Natural killer cell (primary cell): ENCODE measurements at regions of chr12 and their contacts with region 1.

Region 1: GRCh38 chr12:26884765-26885576 is 52.0 kb upstream of the ITPR2 start:
- DNase-seq: peak; percentile 69 to 92
- ATAC-seq: peak; percentile 97 to 100 (median 99)
- H3K4me3 ChIP-seq: no peak overlapping the region
- H3K4me3 Mint-ChIP-seq: peak overlapping the region; percentile 68
- H3K27ac ChIP-seq: no peak overlapping the region
- H3K27ac Mint-ChIP-seq: peak overlapping the region in 1 of 2 donors; percentile 9
- H3K4me1 ChIP-seq: peaks cover 7% of the 10 kb centered on the region
- H3K4me1 Mint-ChIP-seq: peaks cover 12 to 15% of the 10 kb centered on the region in 2 donors
- H3K27me3 ChIP-seq: no peaks in the 10 kb centered on the region
- H3K27me3 Mint-ChIP-seq: peaks cover 11 to 28% of the 10 kb centered on the region in 2 donors
- CTCF ChIP-seq: peak; percentile 96

Region 2: DNA sequence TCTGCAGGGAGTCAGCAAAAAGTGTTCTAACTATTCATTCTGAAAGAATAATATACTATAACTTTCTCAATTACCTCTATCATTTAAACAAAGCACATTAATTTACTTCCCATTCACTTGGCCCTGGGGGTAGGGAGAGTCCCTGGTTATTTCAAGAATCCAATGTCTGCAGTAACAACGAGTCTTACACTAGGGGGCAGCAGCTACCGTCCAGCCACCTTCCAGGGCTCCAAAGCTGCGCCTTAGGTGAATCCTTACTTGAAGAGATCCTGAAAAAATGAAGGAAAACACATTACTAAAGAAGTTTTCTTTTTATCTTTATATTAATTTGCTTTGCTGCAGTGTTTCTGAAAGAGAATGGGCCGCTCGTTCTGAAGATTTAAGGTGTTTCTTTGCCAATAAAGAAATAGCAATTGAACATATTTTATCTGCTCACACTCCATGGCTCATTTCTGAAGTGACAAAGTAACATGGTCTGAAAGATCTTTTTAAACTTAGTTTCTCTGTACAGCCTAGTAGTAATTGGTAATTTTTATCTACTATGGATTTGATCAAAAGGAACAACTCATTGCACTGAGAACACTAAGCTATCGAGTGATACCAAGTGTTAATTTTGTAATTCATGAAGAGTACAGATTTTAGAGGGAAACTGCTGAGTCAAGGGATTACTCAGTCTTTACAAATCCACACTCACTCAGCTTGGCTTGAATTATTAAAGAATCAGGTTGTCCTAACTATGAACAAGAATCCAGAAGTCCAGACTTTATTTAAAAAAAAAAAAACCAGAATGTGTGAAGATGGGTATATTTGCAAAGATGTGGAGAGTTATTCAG is 787.7 kb before region 1 on chr12:
- intact Hi-C with region 1: loop called (anchors 10 kb)
- DNase-seq: peak; percentile 23 to 78
- ATAC-seq: peak; percentile 88 to 97 (median 91)
- H3K4me3 ChIP-seq: no peak overlapping the region
- H3K4me3 Mint-ChIP-seq: no peak overlapping the region
- H3K27ac ChIP-seq: no peak overlapping the region
- H3K27ac Mint-ChIP-seq: no peak overlapping the region
- H3K4me1 ChIP-seq: no peaks in the 10 kb centered on the region
- H3K4me1 Mint-ChIP-seq: no peaks in the 10 kb centered on the region
- H3K27me3 ChIP-seq: no peaks in the 10 kb centered on the region
- H3K27me3 Mint-ChIP-seq: peaks cover 5 to 19% of the 10 kb centered on the region in 2 donors
- CTCF ChIP-seq: peak; percentile 93

Region 3: DNA sequence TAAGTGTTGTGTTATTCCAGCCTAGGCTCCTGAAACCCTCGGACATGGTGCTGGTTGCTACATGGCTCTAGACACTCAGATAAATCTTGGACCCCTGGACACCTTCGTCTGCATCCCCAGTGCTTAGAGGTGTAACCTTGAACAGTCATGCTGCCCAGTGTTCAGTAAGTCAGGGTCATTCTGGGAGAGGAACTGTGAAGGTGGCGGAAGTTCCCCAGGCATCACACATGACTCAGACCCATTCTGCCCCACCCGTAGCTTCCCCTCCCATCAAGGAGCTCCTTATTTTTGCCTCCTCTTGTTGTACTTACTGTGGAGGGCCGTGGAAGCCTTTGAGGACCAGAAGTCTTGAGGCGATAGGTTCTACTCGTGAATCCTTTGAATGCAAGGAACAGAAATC is 707.7 kb before region 1 on chr12:
- intact Hi-C with region 1: no loop called
- DNase-seq: no peak
- ATAC-seq: no peak
- H3K4me3 ChIP-seq: no peak overlapping the region
- H3K4me3 Mint-ChIP-seq: no peak overlapping the region
- H3K27ac ChIP-seq: no peak overlapping the region
- H3K27ac Mint-ChIP-seq: no peak overlapping the region
- H3K4me1 ChIP-seq: no peaks in the 10 kb centered on the region
- H3K4me1 Mint-ChIP-seq: no peaks in the 10 kb centered on the region
- H3K27me3 ChIP-seq: peaks cover 3% of the 10 kb centered on the region
- H3K27me3 Mint-ChIP-seq: peaks cover 14 to 47% of the 10 kb centered on the region in 2 donors
- CTCF ChIP-seq: no peak

Region 4: DNA sequence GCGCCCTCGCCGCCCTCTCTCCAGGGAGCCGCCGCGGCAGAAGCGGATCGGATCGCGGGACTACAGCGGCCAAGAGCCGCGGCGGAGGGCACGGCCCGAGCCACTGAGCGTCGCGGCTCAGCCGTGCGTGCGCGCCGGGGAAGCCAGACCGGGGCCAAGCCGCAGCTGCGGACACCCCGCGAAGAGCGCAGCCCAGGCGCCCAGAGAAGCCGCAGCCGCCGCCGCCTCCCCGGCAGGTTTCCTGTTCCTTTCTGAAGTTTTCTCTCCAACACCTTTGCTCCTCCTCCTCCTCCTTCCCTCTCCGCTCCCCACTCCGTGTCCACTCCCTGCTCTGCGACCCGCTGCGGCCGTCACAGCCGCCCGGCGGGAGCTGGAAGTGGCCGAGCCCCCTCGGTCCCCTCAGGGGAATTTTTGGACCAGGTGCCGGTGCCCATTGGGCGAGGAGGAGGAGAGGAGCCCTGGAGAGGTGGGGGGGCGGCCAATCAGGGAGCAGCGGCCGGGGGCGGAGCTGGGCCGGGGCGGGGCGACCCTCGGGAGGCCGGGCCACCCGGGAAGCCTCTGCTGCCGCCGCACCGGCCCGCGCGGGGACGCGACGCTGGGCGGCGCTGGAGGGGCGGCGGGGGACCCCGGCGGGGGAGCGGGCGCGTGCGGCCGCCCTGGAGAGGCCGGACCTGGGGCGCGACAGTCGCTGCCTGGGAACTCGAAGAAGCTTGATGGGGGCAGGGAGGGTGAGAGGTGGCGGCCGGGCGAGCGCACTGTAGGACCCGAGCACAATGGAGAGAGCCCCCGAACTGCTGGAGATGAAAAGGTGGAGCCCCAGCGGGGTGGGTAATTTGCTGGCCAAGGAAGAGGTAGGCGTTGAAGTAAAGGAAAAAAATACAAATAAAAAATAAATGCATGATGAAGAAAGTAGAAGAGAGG is 51.9 kb before region 1 on chr12 and contains the start of gene ITPR2:
- intact Hi-C with region 1: loop called (anchors 10 kb)
- DNase-seq: peak; percentile 89 to 94
- ATAC-seq: peak; percentile 89 to 96 (median 90)
- H3K4me3 ChIP-seq: peak within 1 kb of the TSS; percentile 90
- H3K4me3 Mint-ChIP-seq: peak within 1 kb of the TSS; percentile 97
- H3K27ac ChIP-seq: peak within 1 kb of the TSS; percentile 97
- H3K27ac Mint-ChIP-seq: peak within 1 kb of the TSS; percentile 97 to 98
- H3K4me1 ChIP-seq: peaks cover 17% of the 10 kb centered on the region
- H3K4me1 Mint-ChIP-seq: peaks cover 45 to 47% of the 10 kb centered on the region in 2 donors
- H3K27me3 ChIP-seq: no peaks in the 10 kb centered on the region
- H3K27me3 Mint-ChIP-seq: no peaks in the 10 kb centered on the region
- CTCF ChIP-seq: peak; percentile 22
- total RNA-seq, gene ITPR2: 59.1 to 70.7 (median 68.2) TPM

Region 5: GRCh38 chr12:26853303-26854030 is 31.5 kb before region 1 on chr12:
- intact Hi-C with region 1: loop called (anchors 1 kb)
- DNase-seq: peak; percentile 59 to 86
- ATAC-seq: peak; percentile 91 to 97 (median 94)
- H3K4me3 ChIP-seq: no peak overlapping the region
- H3K4me3 Mint-ChIP-seq: no peak overlapping the region
- H3K27ac ChIP-seq: no peak overlapping the region
- H3K27ac Mint-ChIP-seq: no peak overlapping the region
- H3K4me1 ChIP-seq: peaks cover 4% of the 10 kb centered on the region
- H3K4me1 Mint-ChIP-seq: no peaks in the 10 kb centered on the region
- H3K27me3 ChIP-seq: no peaks in the 10 kb centered on the region
- H3K27me3 Mint-ChIP-seq: no peaks in the 10 kb centered on the region
- CTCF ChIP-seq: peak; percentile 82